Mucosa of descending colon (tissue), 3 donors: ENCODE measurements at regions of chr1 and their contacts with region 1.

Region 1: DNA sequence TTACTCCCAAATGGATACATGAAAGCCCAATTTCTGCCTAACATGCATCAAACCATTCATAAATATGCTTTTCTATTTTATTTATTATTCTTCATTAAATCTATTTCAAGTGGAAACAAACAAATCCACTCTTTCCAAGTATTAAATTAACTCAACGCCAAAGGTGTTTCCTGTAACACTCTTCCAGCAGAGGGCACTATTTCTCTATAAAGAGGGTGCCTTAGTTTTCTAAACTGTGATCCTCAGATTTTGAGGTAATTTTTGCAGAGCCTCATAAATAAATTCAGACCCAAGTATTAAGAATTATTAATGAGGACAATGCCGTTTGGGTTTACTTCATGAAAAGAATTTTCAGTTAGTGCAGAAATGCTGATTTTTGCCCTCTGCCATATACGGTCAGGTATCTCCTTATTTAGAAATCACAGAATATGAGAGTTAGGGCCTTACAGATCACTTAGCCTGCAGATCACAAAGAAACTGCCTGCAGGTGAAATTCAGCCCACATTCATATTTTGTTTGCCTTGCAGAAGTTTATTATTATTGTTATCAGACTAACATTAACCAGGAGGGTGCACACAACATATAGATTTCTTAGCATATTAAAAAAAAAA is 40.1 kb upstream of the MYSM1 start:
- DNase-seq: peak in 1 of 3 donors; percentile 60
- ATAC-seq: peak; percentile 64
- H3K4me3 ChIP-seq: no peak overlapping the region
- H3K4me1 ChIP-seq: no peaks in the 10 kb centered on the region
- CTCF ChIP-seq: peak; percentile 66

Region 2: GRCh38 chr1:58791106-58791505 is 51.1 kb after region 1 on chr1:
- intact Hi-C with region 1: no loop called
- DNase-seq: no peak
- ATAC-seq: no peak
- H3K4me3 ChIP-seq: no peak overlapping the region
- H3K4me1 ChIP-seq: no peaks in the 10 kb centered on the region
- CTCF ChIP-seq: no peak

Region 3: DNA sequence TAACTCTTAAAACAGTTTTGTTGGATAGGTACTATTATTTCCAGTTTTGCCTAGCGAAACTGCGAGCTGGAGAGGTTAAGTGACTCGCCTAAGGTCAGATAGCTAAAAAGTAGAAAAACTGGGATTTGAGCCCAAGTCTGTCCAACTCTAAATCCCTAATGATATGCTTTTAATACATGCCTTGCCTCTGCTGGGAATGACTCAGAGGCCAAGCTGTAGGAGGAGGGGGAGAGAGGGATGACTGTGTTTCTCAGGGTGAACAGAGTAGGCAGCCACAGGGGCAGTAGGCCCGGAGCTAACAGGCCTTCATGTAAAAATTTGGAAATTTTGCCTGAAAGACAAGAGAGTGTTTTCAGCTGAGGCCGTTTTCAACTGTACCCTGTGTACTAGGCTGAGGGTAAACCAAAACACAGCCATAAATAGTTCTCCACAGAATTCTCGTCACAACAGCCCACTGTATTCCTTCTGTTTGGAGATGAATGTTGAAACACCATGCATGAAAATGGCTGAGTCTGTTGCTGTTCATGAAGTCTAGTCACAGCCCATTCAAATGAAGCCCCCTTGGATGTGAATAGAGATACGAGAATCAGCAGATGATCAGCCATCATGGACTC is 967.3 kb after region 1 on chr1:
- intact Hi-C with region 1: loop called in 1 of 2 experiments (anchors 10 kb)
- DNase-seq: no peak
- ATAC-seq: peak; percentile 71
- H3K4me3 ChIP-seq: no peak overlapping the region
- H3K4me1 ChIP-seq: no peaks in the 10 kb centered on the region
- CTCF ChIP-seq: no peak

Region 4: GRCh38 chr1:59759156-59759925 is 1019.4 kb after region 1 on chr1:
- intact Hi-C with region 1: loop called in 1 of 2 experiments (anchors 10 kb)
- DNase-seq: peak; percentile 79 to 84 (median 82)
- ATAC-seq: peak; percentile 99
- H3K4me3 ChIP-seq: no peak overlapping the region
- H3K4me1 ChIP-seq: peaks cover 6% of the 10 kb centered on the region
- CTCF ChIP-seq: peak; percentile 79